Posterior vena cava (tissue), 2 donors: ENCODE measurements at regions of chr6 and their contacts with region 1.

Region 1: DNA sequence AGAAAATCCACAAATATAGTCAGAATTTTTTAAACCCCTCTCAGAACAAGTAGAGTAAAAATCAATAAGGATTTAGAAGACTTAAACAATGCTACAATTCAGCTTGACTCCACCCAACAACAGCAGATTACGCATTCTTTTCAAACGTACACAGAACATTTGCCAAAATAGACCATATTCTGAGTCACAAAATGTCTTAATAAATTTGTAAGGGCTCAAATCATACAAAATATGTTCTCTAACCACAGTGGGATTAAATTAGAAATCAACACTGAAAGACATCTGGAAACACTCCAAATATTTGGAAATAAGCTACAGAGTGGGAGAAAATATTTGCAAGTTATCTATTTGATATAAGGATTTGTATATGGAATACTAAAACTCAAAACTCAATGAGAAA is 164.2 kb upstream of the AKAP12 start:
- DNase-seq: no peak

Region 2: DNA sequence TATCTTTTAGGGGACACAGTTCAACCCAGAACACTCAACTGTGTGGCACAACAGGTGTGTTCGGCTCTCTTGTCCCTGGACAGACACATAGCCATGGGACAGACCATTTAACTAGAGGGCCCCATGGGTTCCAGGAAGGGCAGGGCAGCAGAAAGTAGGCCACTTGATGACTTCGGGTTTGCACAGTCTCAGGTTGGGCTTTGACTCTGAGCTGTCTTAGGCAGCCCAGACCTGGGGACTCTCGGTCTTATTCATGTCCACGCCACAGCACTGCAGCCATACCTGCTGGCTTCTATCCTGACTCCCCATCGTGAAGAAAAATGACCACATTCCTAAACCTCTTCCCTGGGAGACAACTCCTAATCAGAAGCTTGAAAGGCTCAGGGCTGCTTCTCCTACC is 18.2 kb after region 1 on chr6:
- intact Hi-C with region 1: loop called in 1 of 2 experiments (anchors 1 kb)
- DNase-seq: no peak